Activated naive CD4-positive, alpha-beta T cell treated with anti-CD3 and anti-CD28 coated beads for 36 hours (primary cell): ENCODE measurements at regions of chr17 and their contacts with region 1.

Region 1: GRCh38 chr17:30344283-30345088 is 10.6 kb upstream of the TMIGD1 start:
- DNase-seq: no peak
- H3K4me3 Mint-ChIP-seq: no peak overlapping the region
- H3K27ac Mint-ChIP-seq: no peak overlapping the region
- H3K4me1 Mint-ChIP-seq: peaks cover 21% of the 10 kb centered on the region
- H3K27me3 Mint-ChIP-seq: no peaks in the 10 kb centered on the region

Region 2: DNA sequence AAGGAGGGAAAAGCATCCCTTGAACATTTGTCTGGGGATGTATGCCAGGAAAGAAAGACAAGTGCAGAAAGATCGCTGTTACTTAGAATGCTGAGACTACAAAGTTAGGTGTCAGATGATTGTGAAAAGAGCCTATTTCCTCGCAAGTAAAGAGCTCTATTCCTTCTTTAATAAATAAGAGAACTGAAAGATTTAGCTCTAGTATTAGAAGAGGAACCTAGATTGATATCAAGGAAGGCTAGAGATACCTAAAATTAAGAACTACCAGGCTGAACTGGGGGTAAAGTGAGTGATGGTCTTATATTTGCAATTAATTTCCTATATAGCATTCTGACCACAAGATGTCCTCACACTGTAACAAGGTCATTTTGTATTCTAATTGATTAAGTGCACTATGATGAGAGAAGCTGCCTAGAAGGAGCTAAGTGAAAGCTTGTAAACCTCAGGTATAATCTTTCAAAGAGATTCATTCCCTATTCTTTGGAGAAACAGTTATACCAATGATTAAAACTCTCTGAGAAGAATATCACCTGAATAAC is 476.8 kb before region 1 on chr17:
- CTCF ChIA-PET with region 1: no interaction called
- intact Hi-C with region 1: no loop called
- DNase-seq: no peak
- H3K4me3 Mint-ChIP-seq: no peak overlapping the region
- H3K27ac Mint-ChIP-seq: no peak overlapping the region
- H3K4me1 Mint-ChIP-seq: peaks cover 6% of the 10 kb centered on the region
- H3K27me3 Mint-ChIP-seq: no peaks in the 10 kb centered on the region

Region 3: DNA sequence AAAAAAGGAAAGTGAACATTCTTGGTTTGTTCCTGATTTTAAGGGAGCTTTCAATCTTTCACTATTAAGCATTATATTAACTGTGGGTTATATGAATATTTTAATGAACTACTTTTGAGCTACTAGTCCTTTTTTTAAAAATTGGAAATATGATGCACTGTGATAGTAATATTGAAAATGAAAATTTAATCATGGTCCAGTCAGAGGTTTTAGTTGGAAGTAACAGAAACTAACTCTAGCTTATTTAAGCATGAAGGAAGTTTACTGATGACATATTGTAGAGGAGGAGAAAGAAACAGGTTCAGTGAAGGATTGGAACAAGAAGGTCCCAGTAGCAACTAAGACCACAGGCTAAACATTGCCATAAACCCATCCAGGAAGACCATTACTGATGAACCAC is 10.2 kb after region 1 on chr17:
- CTCF ChIA-PET with region 1: interaction called, 14 read pairs
- intact Hi-C with region 1: no loop called
- DNase-seq: no peak
- H3K4me3 Mint-ChIP-seq: no peak overlapping the region
- H3K27ac Mint-ChIP-seq: no peak overlapping the region
- H3K4me1 Mint-ChIP-seq: peaks cover 12% of the 10 kb centered on the region
- H3K27me3 Mint-ChIP-seq: no peaks in the 10 kb centered on the region

Region 4: GRCh38 chr17:30477083-30477773 is 132.7 kb after region 1 on chr17 and contains the start of gene GOSR1:
- CTCF ChIA-PET with region 1: interaction called, 19 read pairs
- intact Hi-C with region 1: loop called (anchors 1 kb)
- DNase-seq: peak; percentile 97
- H3K4me3 Mint-ChIP-seq: peak within 1 kb of the TSS; percentile 98
- H3K27ac Mint-ChIP-seq: peak within 1 kb of the TSS; percentile 97
- H3K4me1 Mint-ChIP-seq: peaks cover 36% of the 10 kb centered on the region
- H3K27me3 Mint-ChIP-seq: peaks cover 2% of the 10 kb centered on the region
- total RNA-seq, gene GOSR1: 33.9 to 37.3 TPM

Region 5: GRCh38 chr17:30716461-30717300 is 372.2 kb after region 1 on chr17:
- CTCF ChIA-PET with region 1: interaction called, 3 read pairs
- intact Hi-C with region 1: loop called (anchors 2 kb)
- DNase-seq: peak; percentile 36
- H3K4me3 Mint-ChIP-seq: no peak overlapping the region
- H3K27ac Mint-ChIP-seq: no peak overlapping the region
- H3K4me1 Mint-ChIP-seq: peaks cover 11% of the 10 kb centered on the region
- H3K27me3 Mint-ChIP-seq: no peaks in the 10 kb centered on the region